Lower leg skin (tissue), 4 donors: ENCODE measurements at regions of chr18 and their contacts with region 1.

Region 1: DNA sequence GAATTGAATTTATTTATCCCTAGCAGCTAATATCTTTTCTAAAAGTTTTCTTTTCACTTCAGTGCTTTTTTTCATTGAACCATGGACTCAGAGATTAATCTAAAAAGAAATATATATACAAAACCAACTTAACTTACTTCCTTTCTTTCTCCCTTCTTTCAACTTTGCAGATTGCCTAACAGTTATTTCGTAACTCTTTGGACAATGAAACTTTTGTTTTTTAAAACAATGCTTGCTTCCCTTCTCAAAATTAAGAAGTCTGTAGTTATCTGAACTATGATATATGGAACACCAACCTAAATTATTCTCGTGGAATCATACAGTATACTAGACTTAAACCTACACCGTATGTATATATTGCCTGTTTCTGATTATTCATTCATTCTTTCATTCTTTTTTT is 62.9 kb downstream of the MIB1 start:
- DNase-seq: no peak
- H3K4me3 ChIP-seq: no peak overlapping the region
- CTCF ChIP-seq: no peak
- POLR2A ChIP-seq: no peak

Region 2: DNA sequence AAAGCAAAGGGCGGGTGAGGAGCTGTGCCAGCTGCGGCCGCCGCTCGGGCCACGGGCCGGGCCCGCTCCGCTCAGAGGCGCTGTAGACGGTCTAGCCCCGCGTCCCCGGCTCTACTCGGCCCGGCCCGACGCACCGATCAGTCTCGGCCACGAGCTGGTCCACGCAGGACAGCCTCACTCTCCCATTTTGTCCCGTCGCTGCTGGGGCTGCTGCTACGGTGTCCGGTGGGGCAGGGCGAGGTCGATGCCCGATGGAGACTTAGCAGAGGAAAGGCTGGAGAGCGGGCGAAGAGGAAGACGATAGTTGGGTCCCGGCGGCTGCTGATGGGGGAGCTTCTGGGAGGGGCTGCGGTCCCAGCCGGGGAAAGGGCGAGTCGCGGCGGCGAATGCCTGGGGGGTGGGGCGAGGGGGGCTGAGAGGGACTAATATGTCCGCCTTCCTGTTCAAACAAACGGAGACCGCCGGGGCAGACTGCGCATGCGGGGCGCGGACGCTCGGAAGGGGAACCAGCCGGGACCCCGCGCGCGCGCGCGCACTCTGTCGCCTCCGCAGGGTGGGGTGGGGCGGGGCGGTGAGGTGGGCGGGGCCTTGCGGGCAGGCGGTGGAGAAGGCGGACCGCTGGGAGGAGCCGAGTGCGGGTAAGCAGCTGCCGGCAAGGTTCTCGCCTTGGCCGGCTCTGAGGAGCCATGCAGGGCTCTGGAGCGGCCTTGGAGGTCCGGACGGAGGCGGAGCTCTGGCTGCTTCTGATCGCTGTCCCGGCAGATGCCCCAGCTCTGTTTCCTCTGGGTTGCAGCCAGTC is 692.0 kb before region 1 on chr18 and contains the start of gene ROCK1:
- intact Hi-C with region 1: loop called (anchors 10 kb)
- DNase-seq: peak; percentile 96 to 100
- H3K4me3 ChIP-seq: peak within 1 kb of the TSS; percentile 98
- CTCF ChIP-seq: no peak
- POLR2A ChIP-seq: no peak
- total RNA-seq, gene ROCK1: 11.5 to 27.3 (median 18.4) TPM